ENCODE measurements at regions of chr3 and their contacts with region 1.

Region 1: GRCh38 chr3:150603153-150603979 is at the start of gene SELENOT:
- DNase-seq: peak; percentile 98
- H3K4me3 ChIP-seq: peak within 1 kb of the TSS; percentile 70 to 84 (median 79)
- H3K27ac ChIP-seq: peak within 1 kb of the TSS; percentile 90 to 98 (median 96)
- H3K4me1 ChIP-seq: peaks cover 26 to 63% (median 51%) of the 10 kb centered on the region in 4 donors
- H3K27me3 ChIP-seq: no peaks in the 10 kb centered on the region
- CTCF ChIP-seq: peak in 1 of 3 experiments; percentile 28
- EP300 ChIP-seq: no peak
- POLR2A ChIP-seq: peak; percentile 76
- total RNA-seq, gene SELENOT: 34.5 to 124 (median 67.5) TPM

Region 2: GRCh38 chr3:150546226-150547044 is 56.9 kb before region 1 on chr3 and contains the starts of genes EIF2A and SERP1:
- intact Hi-C with region 1: loop called (anchors 5 kb)
- DNase-seq: peak; percentile 99
- H3K4me3 ChIP-seq: peak within 1 kb of the TSS; percentile 72 to 95 (median 91)
- H3K27ac ChIP-seq: peak within 1 kb of the TSS; percentile 97 to 100 (median 98)
- H3K4me1 ChIP-seq: peaks cover 19 to 51% (median 43%) of the 10 kb centered on the region in 4 donors
- H3K27me3 ChIP-seq: no peaks in the 10 kb centered on the region
- CTCF ChIP-seq: peak in 1 of 3 experiments; percentile 3
- EP300 ChIP-seq: no peak
- POLR2A ChIP-seq: peak; percentile 93
- total RNA-seq, gene EIF2A: 113 to 176 (median 154) TPM
- total RNA-seq, gene SERP1: 117 to 177 (median 144) TPM

Region 3: DNA sequence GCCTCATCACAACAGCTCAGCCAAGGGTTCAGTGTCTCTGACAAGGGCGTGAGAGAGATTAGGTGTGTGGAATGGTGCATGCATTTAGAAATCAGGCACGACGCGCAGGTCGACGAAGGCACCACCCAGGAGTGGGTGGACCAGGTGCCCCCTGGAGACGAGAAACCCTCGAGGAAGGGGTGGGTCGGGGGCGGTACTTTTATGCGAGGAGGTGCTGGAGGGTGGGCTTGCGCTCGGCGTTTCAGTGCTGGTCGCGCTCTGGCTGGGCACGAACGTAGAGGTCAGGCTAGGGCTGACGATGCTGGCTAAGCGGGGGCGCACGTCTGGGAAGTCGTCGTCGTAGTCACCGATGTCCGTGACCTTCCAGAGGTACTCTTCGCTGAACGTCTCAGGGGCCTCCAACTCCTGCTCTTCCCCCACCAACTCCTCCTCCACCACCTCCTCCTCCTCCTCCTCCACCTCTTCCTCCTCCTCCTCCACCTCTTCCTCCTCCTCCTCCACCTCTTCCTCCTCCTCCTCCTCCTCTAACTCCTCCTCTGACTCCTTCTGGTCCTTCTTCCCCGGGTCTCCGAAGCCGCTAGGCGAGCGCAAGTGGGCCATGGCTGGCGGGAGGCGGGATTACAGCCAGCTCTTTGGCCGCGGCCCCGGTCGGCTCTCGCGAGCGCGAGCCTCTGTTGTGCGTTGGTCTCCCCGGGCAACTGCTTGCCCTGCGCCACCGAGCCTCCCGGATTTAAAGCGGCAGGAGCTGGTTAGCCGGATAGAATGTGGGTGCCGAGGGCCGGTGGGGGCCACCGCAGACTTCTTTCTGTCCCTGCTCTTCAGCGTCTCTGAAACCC is 100.2 kb after region 1 on chr3 and contains the start of gene ERICH6:
- intact Hi-C with region 1: loop called (anchors 5 kb)
- DNase-seq: peak; percentile 96
- H3K4me3 ChIP-seq: peak within 1 kb of the TSS; percentile 58 to 72 (median 64)
- H3K27ac ChIP-seq: peak within 1 kb of the TSS; percentile 74 to 82 (median 79)
- H3K4me1 ChIP-seq: peaks cover 5 to 21% (median 10%) of the 10 kb centered on the region in 4 donors
- H3K27me3 ChIP-seq: no peaks in the 10 kb centered on the region
- CTCF ChIP-seq: peak in 2 of 3 experiments; percentile 31 to 33
- EP300 ChIP-seq: no peak
- POLR2A ChIP-seq: peak; percentile 10
- total RNA-seq, gene ERICH6: not detected

Measured in esophagus muscularis mucosa (tissue), 4 donors.